T-cell (primary cell): ENCODE measurements at regions of chr6 and their contacts with region 1.

Region 1: GRCh38 chr6:127737009-127737486 is 160.1 kb downstream of the C6orf58 start:
- DNase-seq: peak in 30 of 35 experiments; percentile 3 to 83 (median 24)
- ATAC-seq: peak; percentile 82 to 92 (median 84)
- H3K4me3 ChIP-seq: no peak overlapping the region
- H3K4me3 Mint-ChIP-seq: no peak overlapping the region
- H3K27ac ChIP-seq: peak overlapping the region; percentile 2
- H3K27ac Mint-ChIP-seq: peak overlapping the region; percentile 66 to 75
- H3K4me1 ChIP-seq: peaks cover 0 to 12% of the 10 kb centered on the region in 2 experiments
- H3K4me1 Mint-ChIP-seq: peaks cover 59 to 67% (median 59%) of the 10 kb centered on the region in 3 donors
- H3K27me3 ChIP-seq: no peaks in the 10 kb centered on the region
- H3K27me3 Mint-ChIP-seq: no peaks in the 10 kb centered on the region

Region 2: GRCh38 chr6:127748290-127748689 is 11.2 kb after region 1 on chr6:
- CTCF ChIA-PET with region 1: interaction called in 1 of 2 experiments, 11 read pairs
- POLR2A ChIA-PET with region 1: interaction called in 1 of 2 experiments, 3 read pairs
- DNase-seq: no peak
- ATAC-seq: peak in 3 of 4 experiments; percentile 11 to 31 (median 29)
- H3K4me3 ChIP-seq: no peak overlapping the region
- H3K4me3 Mint-ChIP-seq: peak overlapping the region in 1 of 3 donors; percentile 2
- H3K27ac ChIP-seq: no peak overlapping the region
- H3K27ac Mint-ChIP-seq: peak overlapping the region; percentile 85
- H3K4me1 ChIP-seq: peaks cover 3 to 5% of the 10 kb centered on the region in 2 experiments
- H3K4me1 Mint-ChIP-seq: peaks cover 57 to 70% (median 65%) of the 10 kb centered on the region in 3 donors
- H3K27me3 ChIP-seq: no peaks in the 10 kb centered on the region
- H3K27me3 Mint-ChIP-seq: no peaks in the 10 kb centered on the region

Region 3: DNA sequence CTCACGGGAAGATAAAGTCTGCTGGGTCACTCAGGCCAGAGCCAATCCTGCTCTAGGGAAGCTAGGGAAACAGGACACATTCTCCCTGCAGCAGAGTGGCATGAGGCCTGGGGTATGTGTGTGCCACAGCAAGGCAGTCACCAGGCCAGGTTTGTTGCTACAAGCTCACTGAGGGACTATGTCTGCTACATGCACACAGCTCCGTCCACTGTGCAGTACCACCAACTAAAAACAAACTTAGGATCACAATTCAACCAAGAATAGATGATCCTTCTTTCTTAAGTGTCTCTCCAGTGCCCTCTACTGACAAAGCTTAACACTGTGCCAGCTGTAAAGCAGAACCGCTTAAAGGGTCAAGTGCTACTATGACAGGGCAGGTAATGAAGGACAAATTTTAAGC is 590.8 kb after region 1 on chr6:
- CTCF ChIA-PET with region 1: interaction called, 12 to 58 read pairs
- POLR2A ChIA-PET with region 1: no interaction called
- DNase-seq: peak in 24 of 35 experiments; percentile 0 to 67 (median 8)
- ATAC-seq: peak; percentile 41 to 55 (median 51)
- H3K4me3 ChIP-seq: no peak overlapping the region
- H3K4me3 Mint-ChIP-seq: no peak overlapping the region
- H3K27ac ChIP-seq: no peak overlapping the region
- H3K27ac Mint-ChIP-seq: no peak overlapping the region
- H3K4me1 ChIP-seq: no peaks in the 10 kb centered on the region
- H3K4me1 Mint-ChIP-seq: no peaks in the 10 kb centered on the region
- H3K27me3 ChIP-seq: no peaks in the 10 kb centered on the region
- H3K27me3 Mint-ChIP-seq: no peaks in the 10 kb centered on the region